Dorsolateral prefrontal cortex (tissue), 120 donors: ENCODE measurements at regions of chr3 and their contacts with region 1.

Region 1: GRCh38 chr3:72887705-72888545 is at the start of gene GXYLT2:
- DNase-seq: peak; percentile 48 to 87 (median 80)
- H3K4me3 ChIP-seq: peak within 1 kb of the TSS; percentile 32 to 83 (median 63)
- H3K27ac ChIP-seq: peak within 1 kb of the TSS; percentile 4 to 92 (median 82)
- H3K27me3 ChIP-seq: no peaks in the 10 kb centered on the region
- CTCF ChIP-seq: peak in 9 of 56 donors; percentile 4 to 23 (median 11)
- total RNA-seq, gene GXYLT2: 4.5 to 19.1 (median 9.2) TPM

Region 2: DNA sequence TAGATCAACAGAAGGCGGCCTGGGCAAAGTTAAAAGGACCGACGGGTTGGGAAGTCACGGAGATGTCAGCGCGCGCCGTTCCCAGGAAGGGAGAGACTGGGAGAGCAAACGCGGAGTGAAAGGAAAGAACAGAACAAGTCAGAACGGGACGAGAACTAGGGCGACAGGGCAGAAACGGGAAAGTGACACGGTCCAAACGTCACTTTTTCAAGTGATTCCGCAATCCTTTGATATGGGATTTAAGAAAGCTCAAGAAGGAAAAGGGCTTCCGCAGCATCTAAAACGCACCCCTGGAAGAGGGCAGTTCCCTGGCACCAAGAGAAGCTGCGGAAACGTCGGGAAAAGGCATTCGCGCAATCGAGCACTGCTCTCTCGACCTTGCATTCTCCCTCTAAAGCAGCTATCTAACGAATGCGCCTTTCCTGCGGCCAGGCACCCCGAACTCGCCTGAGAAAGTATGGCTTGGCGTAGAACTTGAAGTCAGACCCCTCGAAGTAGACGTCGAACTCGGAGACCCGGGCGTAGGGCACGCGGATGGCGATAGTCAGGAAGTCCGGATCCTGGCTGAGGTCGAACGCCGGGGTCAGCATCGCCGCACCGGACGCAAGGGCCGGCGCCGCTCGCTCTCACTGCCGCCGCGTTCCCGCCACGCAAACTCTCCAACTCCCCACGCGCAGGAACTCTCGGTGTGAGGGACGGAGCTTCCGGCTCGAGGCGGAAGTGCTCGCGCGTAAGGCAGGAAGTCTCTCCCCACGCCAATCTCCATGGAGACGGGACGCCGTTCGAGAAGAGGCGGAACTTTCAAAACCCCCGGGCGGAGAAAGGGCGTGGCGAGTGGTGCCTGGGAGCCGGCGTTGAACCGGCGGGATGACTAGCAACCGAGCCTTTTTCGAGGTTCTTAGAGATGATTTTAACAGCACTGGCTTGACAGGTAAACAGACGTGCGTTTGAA is 39.9 kb before region 1 on chr3 and contains the start of gene SHQ1:
- intact Hi-C with region 1: loop called (anchors 5 kb)
- DNase-seq: peak; percentile 88 to 95 (median 93)
- H3K4me3 ChIP-seq: peak within 1 kb of the TSS; percentile 64 to 99 (median 88)
- H3K27ac ChIP-seq: peak within 1 kb of the TSS in 37 of 59 donors; percentile 6 to 84 (median 55)
- H3K27me3 ChIP-seq: peaks cover 0 to under 1% (median 0%) of the 10 kb centered on the region in 45 donors
- CTCF ChIP-seq: peak in 22 of 56 donors; percentile 6 to 45 (median 24)
- total RNA-seq, gene SHQ1: 14.8 to 39.4 (median 25.9) TPM

Region 3: DNA sequence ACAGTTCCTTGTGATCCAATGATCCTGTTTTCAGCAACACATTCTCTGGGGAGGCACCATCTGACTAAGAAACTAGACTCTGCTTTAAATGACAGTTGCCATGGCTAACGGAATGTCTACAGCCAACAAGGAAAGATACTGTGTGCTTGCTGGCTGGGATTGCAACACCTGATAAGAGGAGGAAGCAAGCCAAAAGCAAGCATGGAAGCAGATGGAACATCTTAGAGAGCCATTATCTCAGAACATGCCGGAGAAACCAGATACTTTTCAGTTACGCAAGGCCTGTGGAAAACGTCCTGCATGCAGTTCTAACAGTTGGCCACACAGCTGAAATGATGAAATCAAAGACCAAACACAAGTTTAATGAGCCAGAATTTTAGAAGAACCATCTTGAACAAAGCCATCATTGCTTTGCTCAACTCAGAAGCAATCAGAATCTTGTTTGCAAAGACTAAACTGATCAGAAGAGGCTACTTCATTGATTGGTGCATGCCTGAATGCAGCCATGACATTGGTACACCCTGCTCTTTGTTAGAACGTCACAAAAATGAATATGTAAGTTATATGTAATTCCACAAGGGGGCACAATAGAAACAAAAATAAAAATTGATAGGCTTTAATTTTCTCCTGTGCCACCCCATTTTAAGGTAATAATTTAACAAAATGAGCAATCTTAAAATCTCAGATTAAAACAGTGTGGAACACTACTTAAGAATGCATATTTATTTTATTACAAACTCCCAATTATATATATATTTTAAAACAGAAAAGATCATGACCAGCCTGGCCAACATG is 50.7 kb after region 1 on chr3:
- intact Hi-C with region 1: loop called (anchors 2 to 5 kb)
- DNase-seq: peak in 3 of 10 donors; percentile 7 to 30 (median 10)
- H3K4me3 ChIP-seq: peak overlapping the region in 17 of 59 donors; percentile 5 to 34 (median 16)
- H3K27ac ChIP-seq: peak overlapping the region in 58 of 59 donors; percentile 10 to 86 (median 74)
- H3K27me3 ChIP-seq: no peaks in the 10 kb centered on the region
- CTCF ChIP-seq: peak in 55 of 56 donors; percentile 44 to 89 (median 73)